HepG2 (cell line): ENCODE measurements at regions of chr12 and their contacts with region 1.

Region 1: GRCh38 chr12:25293653-25294052 is 42.9 kb upstream of the KRAS start:
- DNase-seq: no peak
- ATAC-seq: no peak
- H3K4me3 ChIP-seq: no peak overlapping the region
- H3K27ac ChIP-seq: no peak overlapping the region
- H3K4me1 ChIP-seq: no peaks in the 10 kb centered on the region
- H3K27me3 ChIP-seq: peaks cover 1 to 3% of the 10 kb centered on the region in 2 experiments; a peak in 2 of 5 replicates
- CTCF ChIP-seq: no peak
- EP300 ChIP-seq: no peak
- POLR2A ChIP-seq: no peak
- RAD21 ChIP-seq: no peak

Region 2: GRCh38 chr12:25308756-25309155 is 15.1 kb after region 1 on chr12:
- CTCF ChIA-PET with region 1: no interaction called
- POLR2A ChIA-PET with region 1: no interaction called
- in situ Hi-C with region 1: no loop called
- intact Hi-C with region 1: no loop called
- DNase-seq: no peak
- ATAC-seq: no peak
- H3K4me3 ChIP-seq: no peak overlapping the region
- H3K27ac ChIP-seq: no peak overlapping the region
- H3K4me1 ChIP-seq: no peaks in the 10 kb centered on the region
- H3K27me3 ChIP-seq: no peaks in the 10 kb centered on the region
- CTCF ChIP-seq: no peak
- EP300 ChIP-seq: no peak
- POLR2A ChIP-seq: no peak
- RAD21 ChIP-seq: no peak

Region 3: GRCh38 chr12:25347716-25348271 is 54.1 kb after region 1 on chr12:
- CTCF ChIA-PET with region 1: no interaction called
- POLR2A ChIA-PET with region 1: no interaction called
- in situ Hi-C with region 1: no loop called
- intact Hi-C with region 1: loop called (anchors 5 kb)
- DNase-seq: no peak
- ATAC-seq: no peak
- H3K4me3 ChIP-seq: no peak overlapping the region
- H3K27ac ChIP-seq: no peak overlapping the region
- H3K4me1 ChIP-seq: no peaks in the 10 kb centered on the region
- H3K27me3 ChIP-seq: no peaks in the 10 kb centered on the region
- CTCF ChIP-seq: no peak
- EP300 ChIP-seq: no peak
- POLR2A ChIP-seq: no peak
- RAD21 ChIP-seq: no peak